AG04449 (cell line): ENCODE measurements at regions of chr19 and their contacts with region 1.

Region 1: GRCh38 chr19:17468302-17469091 is 1.8 kb upstream of the SLC27A1 start:
- DNase-seq: no peak
- H3K4me3 ChIP-seq: peak overlapping the region; percentile 75
- CTCF ChIP-seq: no peak

Region 2: GRCh38 chr19:17282488-17283255 is 185.8 kb before region 1 on chr19:
- CTCF ChIA-PET with region 1: no interaction called
- POLR2A ChIA-PET with region 1: no interaction called
- DNase-seq: no peak
- H3K4me3 ChIP-seq: peak overlapping the region; percentile 45
- CTCF ChIP-seq: peak; percentile 98

Region 3: GRCh38 chr19:17346109-17346671 is 122.3 kb before region 1 on chr19:
- CTCF ChIA-PET with region 1: interaction called, 15 read pairs
- POLR2A ChIA-PET with region 1: no interaction called
- DNase-seq: no peak
- H3K4me3 ChIP-seq: no peak overlapping the region
- CTCF ChIP-seq: peak; percentile 93

Region 4: GRCh38 chr19:17455308-17456123 is 13.0 kb before region 1 on chr19:
- CTCF ChIA-PET with region 1: interaction called, 28 read pairs
- POLR2A ChIA-PET with region 1: no interaction called
- DNase-seq: no peak
- H3K4me3 ChIP-seq: no peak overlapping the region
- CTCF ChIP-seq: no peak

Region 5: DNA sequence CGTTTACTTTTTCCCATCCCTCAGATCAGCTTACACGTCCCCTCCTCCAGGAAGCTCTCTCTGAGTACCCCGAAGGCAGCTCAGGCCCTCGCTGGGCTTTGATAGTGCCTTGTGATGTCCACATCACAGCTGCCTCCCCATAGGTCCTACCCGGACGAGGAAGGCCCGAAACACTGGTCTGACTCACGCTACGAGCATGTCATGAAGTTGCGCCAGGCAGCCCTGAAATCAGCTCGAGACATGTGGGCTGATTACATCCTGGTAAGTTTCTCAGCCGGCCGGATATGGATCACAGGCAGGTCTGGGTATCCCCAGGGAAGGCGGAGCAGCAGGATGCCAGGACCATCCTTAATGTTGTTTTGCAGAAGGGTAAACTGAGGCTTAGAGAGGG is 91.7 kb after region 1 on chr19:
- CTCF ChIA-PET with region 1: no interaction called
- POLR2A ChIA-PET with region 1: no interaction called
- DNase-seq: no peak
- H3K4me3 ChIP-seq: no peak overlapping the region
- CTCF ChIP-seq: no peak